HEK293 (cell line): ENCODE measurements at regions of chr5 and their contacts with region 1.

Region 1: DNA sequence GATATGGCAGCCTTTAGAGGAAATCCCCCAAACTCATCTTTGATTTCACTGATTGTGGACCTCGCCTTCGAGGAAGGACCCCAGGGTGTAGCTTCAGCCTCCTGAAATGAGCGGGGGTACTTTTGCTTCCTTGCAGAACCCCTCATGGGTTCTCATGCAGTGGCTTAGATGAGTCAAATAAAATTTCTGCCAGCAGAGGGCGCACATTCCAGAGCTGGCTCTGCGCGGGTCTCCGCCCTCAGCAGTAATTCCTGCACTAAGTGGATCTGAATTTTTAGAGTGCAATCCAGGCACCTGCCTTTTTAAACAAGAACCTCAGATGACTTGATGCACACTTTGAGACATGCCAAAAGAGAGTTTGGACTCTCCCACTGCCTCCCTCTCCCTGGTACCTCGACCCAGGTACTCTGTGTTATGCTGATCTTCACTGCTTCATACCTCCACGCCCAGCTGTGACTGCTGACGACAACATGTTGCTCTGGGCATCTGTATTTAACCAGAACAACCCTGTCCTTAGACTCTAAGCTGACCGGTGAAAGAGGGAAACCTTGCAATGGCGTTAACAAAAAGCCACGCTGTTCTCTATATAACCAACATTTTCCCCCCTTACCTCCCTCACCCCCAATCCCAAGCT is 7.3 kb downstream of the EGFLAM start:
- H3K4me3 ChIP-seq: no peak overlapping the region
- H3K27ac ChIP-seq: no peak overlapping the region
- H3K4me1 ChIP-seq: peaks cover 10% of the 10 kb centered on the region; the same call in 1 of the 2 replicates
- CTCF ChIP-seq: peak; percentile 57

Region 2: DNA sequence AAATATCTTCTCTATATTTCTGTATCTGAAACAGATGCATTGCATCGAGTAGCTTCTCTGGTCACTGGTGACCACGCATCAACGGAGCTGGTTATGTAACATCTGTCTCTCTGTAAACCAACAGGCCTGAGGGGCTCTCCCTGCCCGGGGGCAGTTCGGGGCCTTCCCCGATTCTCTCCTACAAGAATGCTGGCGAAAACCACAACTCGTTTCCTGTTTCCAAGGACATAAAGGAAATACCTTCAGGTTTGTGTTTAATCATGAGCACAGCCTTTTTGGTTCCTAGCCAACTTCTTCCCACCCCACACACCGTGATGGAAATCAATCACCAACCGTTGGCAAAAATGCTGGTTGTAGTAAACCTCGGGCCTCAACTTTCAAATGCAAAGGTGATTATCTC is 451.0 kb before region 1 on chr5:
- CTCF ChIA-PET with region 1: no interaction called
- POLR2A ChIA-PET with region 1: interaction called, 11 read pairs
- H3K4me3 ChIP-seq: no peak overlapping the region
- H3K27ac ChIP-seq: no peak overlapping the region
- H3K4me1 ChIP-seq: 0 out of 2 replicates have a peak, but pooled peaks cover 8% of the 10 kb centered on the region
- CTCF ChIP-seq: no peak

Region 3: GRCh38 chr5:38208782-38209378 is 56.8 kb before region 1 on chr5:
- CTCF ChIA-PET with region 1: interaction called, 23 read pairs
- POLR2A ChIA-PET with region 1: no interaction called
- H3K4me3 ChIP-seq: no peak overlapping the region
- H3K27ac ChIP-seq: no peak overlapping the region
- H3K4me1 ChIP-seq: no peaks in the 10 kb centered on the region
- CTCF ChIP-seq: peak; percentile 67

Region 4: GRCh38 chr5:38250763-38251448 is 14.8 kb before region 1 on chr5:
- CTCF ChIA-PET with region 1: interaction called, 34 read pairs
- POLR2A ChIA-PET with region 1: no interaction called
- H3K4me3 ChIP-seq: no peak overlapping the region
- H3K27ac ChIP-seq: no peak overlapping the region
- H3K4me1 ChIP-seq: peaks cover 6% of the 10 kb centered on the region; the same call in 1 of the 2 replicates
- CTCF ChIP-seq: no peak

Region 5: DNA sequence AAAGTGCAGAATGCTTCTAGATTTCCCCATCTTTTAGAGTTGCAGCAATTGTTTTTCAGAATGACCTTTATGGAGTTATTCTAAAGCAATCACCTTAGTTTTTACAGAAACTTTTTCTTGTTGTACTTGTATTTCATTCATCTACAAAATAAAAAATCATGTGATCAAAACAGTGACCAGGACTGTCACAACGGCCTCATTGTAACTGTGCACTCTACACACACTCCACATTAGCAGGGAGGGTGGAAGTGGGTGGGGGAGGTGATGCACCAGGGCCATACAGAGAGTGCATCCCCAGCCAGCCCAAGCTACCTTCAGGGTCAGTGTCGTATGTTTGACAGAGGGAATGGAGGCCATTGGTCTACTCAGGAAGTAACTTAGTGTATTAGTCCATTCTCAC is 19.6 kb after region 1 on chr5:
- CTCF ChIA-PET with region 1: interaction called, 52 read pairs
- POLR2A ChIA-PET with region 1: no interaction called
- H3K4me3 ChIP-seq: no peak overlapping the region
- H3K27ac ChIP-seq: no peak overlapping the region
- H3K4me1 ChIP-seq: no peaks in the 10 kb centered on the region
- CTCF ChIP-seq: no peak

Region 6: DNA sequence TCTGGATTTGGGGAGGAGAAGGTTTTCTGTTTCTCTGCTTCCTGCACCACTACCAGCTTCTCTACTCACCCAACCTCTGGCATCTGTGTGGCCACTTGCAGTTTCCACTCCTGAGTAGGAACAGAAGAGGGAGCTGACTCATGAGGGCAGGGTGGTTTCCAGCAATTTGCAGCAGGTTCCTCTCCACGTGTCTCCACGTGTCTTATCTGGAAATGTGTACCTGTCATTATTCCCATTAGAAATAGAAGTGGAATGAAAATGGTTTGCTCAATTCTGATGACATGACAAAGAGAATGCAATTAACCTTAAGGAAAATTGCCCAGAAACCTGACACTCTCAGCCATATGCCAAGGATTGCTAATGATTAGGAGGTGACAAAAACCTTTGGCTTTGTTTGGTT is 25.7 kb after region 1 on chr5:
- CTCF ChIA-PET with region 1: interaction called, 26 read pairs
- POLR2A ChIA-PET with region 1: no interaction called
- H3K4me3 ChIP-seq: no peak overlapping the region
- H3K27ac ChIP-seq: no peak overlapping the region
- H3K4me1 ChIP-seq: no peaks in the 10 kb centered on the region
- CTCF ChIP-seq: no peak

Region 7: DNA sequence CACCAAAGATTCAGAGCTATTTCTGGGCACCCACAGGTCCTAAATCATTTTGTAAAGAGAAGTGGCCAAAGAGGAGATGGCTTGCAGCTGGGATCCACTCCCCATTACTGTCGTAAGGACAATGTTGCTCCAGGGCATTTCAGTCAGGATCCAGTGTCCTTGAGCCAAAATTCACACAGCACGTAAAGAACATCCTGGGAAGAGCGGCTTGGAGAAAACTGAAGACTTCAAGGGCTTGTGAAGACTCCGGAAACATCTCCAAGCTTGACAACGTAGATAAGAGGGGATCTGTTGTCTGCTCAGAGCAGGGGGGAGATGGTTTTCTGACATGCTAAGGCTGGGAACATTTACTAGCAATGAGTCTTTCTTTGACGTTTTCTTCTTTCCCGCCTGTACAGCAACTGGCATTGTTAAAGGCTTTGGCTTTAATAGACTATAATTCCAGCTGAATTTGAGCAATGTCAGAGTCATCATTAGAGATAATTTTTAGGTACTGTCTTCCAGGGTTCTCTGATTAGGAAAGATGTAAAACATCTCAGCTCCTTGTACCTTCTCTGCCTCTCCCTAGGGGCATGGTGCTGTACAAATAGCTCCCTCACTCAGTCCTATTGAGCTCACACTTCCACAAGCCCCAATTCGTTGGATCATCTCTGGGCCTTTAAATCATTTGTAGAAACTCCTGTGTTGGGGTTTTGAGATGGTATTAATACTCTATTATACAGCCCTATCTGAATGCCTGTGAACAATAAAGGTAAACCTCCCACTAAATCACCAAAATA is 32.4 kb after region 1 on chr5:
- CTCF ChIA-PET with region 1: interaction called, 15 read pairs
- POLR2A ChIA-PET with region 1: no interaction called
- H3K4me3 ChIP-seq: no peak overlapping the region
- H3K27ac ChIP-seq: no peak overlapping the region
- H3K4me1 ChIP-seq: no peaks in the 10 kb centered on the region
- CTCF ChIP-seq: no peak